IMR-90 (cell line): ENCODE measurements at regions of chr5 and their contacts with region 1.

Region 1: GRCh38 chr5:98898743-98899142 is 30.1 kb downstream of the CHD1 start:
- DNase-seq: no peak
- ATAC-seq: no peak
- H3K4me3 ChIP-seq: no peak overlapping the region
- H3K27ac ChIP-seq: no peak overlapping the region
- H3K4me1 ChIP-seq: no peaks in the 10 kb centered on the region; the same call in 1 of the 2 replicates
- H3K27me3 ChIP-seq: no peaks in the 10 kb centered on the region
- CTCF ChIP-seq: no peak
- POLR2A ChIP-seq: no peak
- RAD21 ChIP-seq: no peak

Region 2: GRCh38 chr5:98865690-98866089 is 33.1 kb before region 1 on chr5:
- CTCF ChIA-PET with region 1: no interaction called
- POLR2A ChIA-PET with region 1: no interaction called
- dilution Hi-C with region 1: no loop called
- in situ Hi-C with region 1: no loop called
- intact Hi-C with region 1: loop called (anchors 5 kb)
- DNase-seq: no peak
- ATAC-seq: no peak
- H3K4me3 ChIP-seq: no peak overlapping the region
- H3K27ac ChIP-seq: no peak overlapping the region
- H3K4me1 ChIP-seq: no peaks in the 10 kb centered on the region
- H3K27me3 ChIP-seq: no peaks in the 10 kb centered on the region
- CTCF ChIP-seq: no peak
- POLR2A ChIP-seq: no peak
- RAD21 ChIP-seq: no peak